ENCODE measurements at regions of chr9 and their contacts with region 1.

Region 1: GRCh38 chr9:117046666-117047327 is 359.7 kb downstream of the TRIM32 start:
- DNase-seq: no peak
- H3K4me3 ChIP-seq: no peak overlapping the region
- H3K27ac ChIP-seq: no peak overlapping the region
- H3K4me1 ChIP-seq: no peaks in the 10 kb centered on the region
- H3K27me3 ChIP-seq: no peaks in the 10 kb centered on the region
- CTCF ChIP-seq: no peak
- POLR2A ChIP-seq: no peak

Region 2: GRCh38 chr9:117887383-117887782 is 840.6 kb after region 1 on chr9:
- intact Hi-C with region 1: loop called (anchors 5 kb)
- DNase-seq: no peak
- H3K4me3 ChIP-seq: no peak overlapping the region
- H3K27ac ChIP-seq: no peak overlapping the region
- H3K4me1 ChIP-seq: no peaks in the 10 kb centered on the region
- H3K27me3 ChIP-seq: no peaks in the 10 kb centered on the region
- CTCF ChIP-seq: no peak
- POLR2A ChIP-seq: no peak